HepG2 (cell line): ENCODE measurements at regions of chr7 and their contacts with region 1.

Region 1: GRCh38 chr7:139359366-139360209 is at the start of gene LUC7L2:
- DNase-seq: peak; percentile 95
- ATAC-seq: peak; percentile 84
- H3K4me3 ChIP-seq: peak within 1 kb of the TSS; percentile 70 to 97 (median 89)
- H3K27ac ChIP-seq: peak within 1 kb of the TSS; percentile 99
- H3K4me1 ChIP-seq: peaks cover 30% of the 10 kb centered on the region
- H3K27me3 ChIP-seq: no peaks in the 10 kb centered on the region
- CTCF ChIP-seq: peak; percentile 48
- EP300 ChIP-seq: peak in 1 of 2 experiments; percentile 42; a peak in 1 of 4 replicates
- POLR2A ChIP-seq: peak; percentile 93 to 98
- RAD21 ChIP-seq: peak; percentile 6; the same call in 1 of the 2 replicates
- total RNA-seq, gene LUC7L2: 50.7 and 59.5 TPM in 2 replicates

Region 2: DNA sequence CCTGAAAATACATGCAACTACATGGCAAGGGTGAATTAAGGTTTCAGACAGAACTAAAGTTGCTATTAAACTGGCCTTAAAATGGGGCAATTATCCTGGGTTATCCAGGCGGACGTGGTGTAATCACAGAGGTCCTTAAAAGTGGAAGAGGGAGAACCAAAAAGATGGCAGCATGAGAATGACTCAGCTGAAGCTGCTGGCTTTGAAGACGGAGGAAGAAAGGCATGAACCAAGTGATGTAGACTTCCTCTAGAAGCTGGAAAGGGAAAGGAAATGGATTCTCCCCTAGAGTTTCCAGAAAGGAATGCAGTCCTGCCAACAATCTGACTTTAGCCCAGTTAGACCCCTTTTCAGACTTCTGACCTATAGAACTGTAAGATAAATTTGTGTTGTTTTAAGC is 155.6 kb before region 1 on chr7:
- CTCF ChIA-PET with region 1: no interaction called
- POLR2A ChIA-PET with region 1: no interaction called
- in situ Hi-C with region 1: no loop called
- intact Hi-C with region 1: no loop called
- DNase-seq: no peak
- ATAC-seq: no peak
- H3K4me3 ChIP-seq: no peak overlapping the region
- H3K27ac ChIP-seq: no peak overlapping the region
- H3K4me1 ChIP-seq: no peaks in the 10 kb centered on the region
- H3K27me3 ChIP-seq: no peaks in the 10 kb centered on the region
- CTCF ChIP-seq: no peak
- EP300 ChIP-seq: no peak
- POLR2A ChIP-seq: no peak
- RAD21 ChIP-seq: no peak

Region 3: DNA sequence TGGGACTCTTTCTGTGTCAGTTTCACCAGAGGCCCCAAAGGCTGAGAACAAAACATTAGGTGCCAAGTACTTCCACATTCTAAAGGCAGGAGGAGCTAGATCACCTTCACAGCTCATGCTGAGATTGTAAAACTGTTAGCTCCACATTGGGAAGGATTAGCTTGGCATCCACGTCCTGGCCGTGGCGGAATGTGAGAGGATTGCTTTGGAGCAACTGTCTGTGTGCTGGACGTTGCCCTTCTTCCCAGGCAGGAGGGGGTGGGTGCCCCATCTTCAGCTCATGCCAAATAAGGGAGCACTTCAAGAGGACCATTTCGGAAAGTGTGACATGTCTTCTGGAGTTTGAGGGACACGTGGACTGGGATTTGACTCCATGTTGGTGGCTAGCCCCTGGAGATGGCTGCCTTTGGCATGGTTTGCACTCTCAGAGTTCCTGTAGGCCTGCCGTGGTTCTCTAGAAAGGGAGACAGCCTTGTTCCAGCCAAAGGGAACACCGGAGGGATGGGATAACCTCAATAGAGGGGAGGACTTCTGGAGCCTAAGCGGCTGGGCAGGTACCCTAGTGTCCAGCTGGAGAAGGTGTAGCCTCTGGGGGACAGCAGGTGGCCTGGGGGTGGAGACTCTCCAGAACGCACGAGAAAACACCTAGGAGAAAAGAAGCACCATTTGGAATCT is 38.4 kb before region 1 on chr7:
- CTCF ChIA-PET with region 1: no interaction called
- POLR2A ChIA-PET with region 1: interaction called, 4 read pairs
- in situ Hi-C with region 1: no loop called
- intact Hi-C with region 1: loop called (anchors 2 kb)
- DNase-seq: peak; percentile 56
- ATAC-seq: peak; percentile 89
- H3K4me3 ChIP-seq: peak overlapping the region; percentile 0 to 57 (median 38); a peak in 5 of 6 replicates
- H3K27ac ChIP-seq: no peak overlapping the region
- H3K4me1 ChIP-seq: peaks cover 24% of the 10 kb centered on the region
- H3K27me3 ChIP-seq: no peaks in the 10 kb centered on the region
- CTCF ChIP-seq: peak; percentile 54
- EP300 ChIP-seq: no peak
- POLR2A ChIP-seq: no peak
- RAD21 ChIP-seq: peak; percentile 47; the same call in 1 of the 2 replicates